Kidney (tissue), 22 donors: ENCODE measurements at regions of chr3 and their contacts with region 1.

Region 1: GRCh38 chr3:51669241-51670052 is 1.6 kb upstream of the TEX264 start:
- DNase-seq: peak; percentile 81 to 91 (median 87)
- H3K4me3 ChIP-seq: no peak overlapping the region
- H3K27ac ChIP-seq: no peak overlapping the region
- H3K4me1 ChIP-seq: peaks cover 2 to 29% (median 26%) of the 10 kb centered on the region in 3 donors
- H3K27me3 ChIP-seq: no peaks in the 10 kb centered on the region
- CTCF ChIP-seq: peak; percentile 96

Region 2: GRCh38 chr3:51501833-51502561 is 167.4 kb before region 1 on chr3:
- intact Hi-C with region 1: loop called (anchors 5 kb)
- DNase-seq: peak; percentile 80 to 88 (median 83)
- H3K4me3 ChIP-seq: no peak overlapping the region
- H3K27ac ChIP-seq: no peak overlapping the region
- H3K4me1 ChIP-seq: peaks cover 0 to 4% (median 2%) of the 10 kb centered on the region in 3 donors
- H3K27me3 ChIP-seq: no peaks in the 10 kb centered on the region
- CTCF ChIP-seq: peak; percentile 97

Region 3: DNA sequence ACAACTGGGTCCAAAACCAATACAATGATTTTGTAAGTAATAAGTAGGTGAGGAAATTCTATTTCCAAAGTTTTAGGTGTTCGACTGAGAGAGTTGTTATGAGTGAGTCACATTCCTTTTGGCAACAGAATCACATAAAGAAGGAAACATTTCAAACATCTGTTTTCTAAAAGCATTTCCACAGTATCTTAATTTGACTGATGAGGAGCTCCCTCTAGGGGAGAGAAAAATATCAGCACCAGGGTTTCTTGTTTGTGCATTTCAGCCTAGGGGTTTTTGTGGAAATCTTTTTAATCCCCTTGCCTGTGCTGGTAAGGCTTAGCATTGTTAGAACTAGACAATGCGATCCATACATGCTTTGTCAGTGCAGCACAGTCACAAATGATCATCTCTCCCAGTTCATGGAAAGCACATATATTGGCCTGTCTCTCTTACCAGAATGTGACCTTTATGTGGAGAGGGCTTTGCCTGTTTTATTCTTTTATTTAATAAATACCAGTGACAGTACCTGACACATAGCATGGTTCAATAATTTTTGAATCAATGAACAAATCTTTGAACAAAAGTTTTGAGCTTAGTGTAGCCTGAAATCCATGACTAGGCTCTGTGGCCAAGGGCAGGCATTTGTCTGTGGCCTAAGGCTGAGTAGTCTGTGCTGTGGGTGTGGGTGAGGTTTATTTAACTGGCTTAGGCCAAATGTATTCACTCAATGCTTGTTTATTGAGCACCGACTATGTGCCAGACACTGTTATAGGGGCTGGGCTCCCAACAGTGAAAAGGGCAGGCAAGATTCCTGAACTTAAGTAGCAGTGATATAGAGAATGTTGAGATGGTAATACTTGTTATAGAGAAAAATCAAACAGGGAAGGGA is 130.7 kb after region 1 on chr3:
- intact Hi-C with region 1: no loop called
- DNase-seq: peak in 2 of 5 donors; percentile 63 to 81
- H3K4me3 ChIP-seq: no peak overlapping the region
- H3K27ac ChIP-seq: no peak overlapping the region
- H3K4me1 ChIP-seq: peaks cover 0 to 2% (median 0%) of the 10 kb centered on the region in 3 donors
- H3K27me3 ChIP-seq: no peaks in the 10 kb centered on the region
- CTCF ChIP-seq: peak; percentile 68